ENCODE measurements at regions of chr20 and their contacts with region 1.

Region 1: GRCh38 chr20:17518339-17519052 is 12.7 kb downstream of the BFSP1 start:
- DNase-seq: peak; percentile 45 to 70
- H3K4me3 ChIP-seq: no peak overlapping the region
- H3K4me3 Mint-ChIP-seq: no peak overlapping the region
- H3K27ac Mint-ChIP-seq: no peak overlapping the region
- H3K4me1 ChIP-seq: peaks cover 67% of the 10 kb centered on the region
- H3K4me1 Mint-ChIP-seq: peaks cover 33% of the 10 kb centered on the region
- H3K27me3 ChIP-seq: no peaks in the 10 kb centered on the region
- H3K27me3 Mint-ChIP-seq: no peaks in the 10 kb centered on the region
- CTCF ChIP-seq: no peak

Region 2: DNA sequence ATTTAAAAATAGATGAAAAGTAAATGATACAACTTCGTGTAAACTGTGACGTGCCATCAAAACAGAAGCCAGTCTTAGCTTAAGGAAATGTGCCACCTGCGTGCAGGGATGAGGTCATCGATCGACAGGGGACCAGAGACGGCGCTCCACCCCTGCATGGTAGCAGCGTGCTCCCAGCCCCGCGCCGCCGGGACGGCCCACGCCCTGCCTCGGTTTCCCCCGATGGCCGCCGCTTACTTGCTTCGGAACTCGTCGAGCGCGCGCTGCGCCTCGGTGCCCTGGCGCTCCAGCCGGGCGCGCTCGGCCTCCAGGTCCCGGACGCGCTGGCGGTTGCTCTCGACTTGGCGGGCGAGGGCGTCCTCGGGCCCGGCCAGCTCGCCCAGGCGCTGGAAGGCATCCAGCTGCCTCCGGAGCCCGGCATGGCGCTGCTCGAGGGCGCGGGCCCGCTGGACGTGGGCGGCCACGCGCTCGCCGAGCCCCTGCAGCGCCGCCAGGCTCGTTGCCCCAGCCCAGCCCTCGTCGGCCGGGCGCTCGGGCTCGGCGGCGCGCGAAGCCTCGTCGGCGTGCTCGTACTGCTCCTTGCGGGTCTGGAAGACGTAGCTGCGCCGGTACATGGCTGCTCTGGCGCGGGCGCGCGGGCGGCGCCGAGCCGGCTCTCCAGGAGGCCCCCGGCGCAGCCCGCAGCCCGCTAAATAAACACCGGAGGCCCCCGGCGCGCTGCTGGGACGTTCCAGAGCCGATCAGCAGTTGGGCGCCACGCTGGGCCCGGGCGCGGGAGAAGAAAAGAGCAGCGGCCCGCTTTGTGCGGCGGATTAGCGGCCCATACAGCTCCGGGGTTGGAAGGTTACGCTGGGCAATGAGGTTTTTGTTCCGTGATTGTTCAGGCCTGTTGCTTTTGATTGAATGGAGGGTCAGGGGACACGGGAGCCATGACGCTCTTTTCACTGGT is 12.5 kb after region 1 on chr20 and contains the start of gene BFSP1:
- CTCF ChIA-PET with region 1: interaction called, 3 read pairs
- POLR2A ChIA-PET with region 1: no interaction called
- intact Hi-C with region 1: loop called (anchors 2 kb)
- DNase-seq: peak; percentile 63 to 77
- H3K4me3 ChIP-seq: peak within 1 kb of the TSS; percentile 81
- H3K4me3 Mint-ChIP-seq: peak within 1 kb of the TSS; percentile 88
- H3K27ac Mint-ChIP-seq: peak within 1 kb of the TSS; percentile 84
- H3K4me1 ChIP-seq: peaks cover 5% of the 10 kb centered on the region; the same call in 1 of the 2 replicates
- H3K4me1 Mint-ChIP-seq: peaks cover 13% of the 10 kb centered on the region
- H3K27me3 ChIP-seq: no peaks in the 10 kb centered on the region
- H3K27me3 Mint-ChIP-seq: no peaks in the 10 kb centered on the region
- CTCF ChIP-seq: no peak
- total RNA-seq, gene BFSP1: 20.4 and 22.7 TPM in 2 replicates